ENCODE measurements at regions of chr13 and their contacts with region 1.

Region 1: DNA sequence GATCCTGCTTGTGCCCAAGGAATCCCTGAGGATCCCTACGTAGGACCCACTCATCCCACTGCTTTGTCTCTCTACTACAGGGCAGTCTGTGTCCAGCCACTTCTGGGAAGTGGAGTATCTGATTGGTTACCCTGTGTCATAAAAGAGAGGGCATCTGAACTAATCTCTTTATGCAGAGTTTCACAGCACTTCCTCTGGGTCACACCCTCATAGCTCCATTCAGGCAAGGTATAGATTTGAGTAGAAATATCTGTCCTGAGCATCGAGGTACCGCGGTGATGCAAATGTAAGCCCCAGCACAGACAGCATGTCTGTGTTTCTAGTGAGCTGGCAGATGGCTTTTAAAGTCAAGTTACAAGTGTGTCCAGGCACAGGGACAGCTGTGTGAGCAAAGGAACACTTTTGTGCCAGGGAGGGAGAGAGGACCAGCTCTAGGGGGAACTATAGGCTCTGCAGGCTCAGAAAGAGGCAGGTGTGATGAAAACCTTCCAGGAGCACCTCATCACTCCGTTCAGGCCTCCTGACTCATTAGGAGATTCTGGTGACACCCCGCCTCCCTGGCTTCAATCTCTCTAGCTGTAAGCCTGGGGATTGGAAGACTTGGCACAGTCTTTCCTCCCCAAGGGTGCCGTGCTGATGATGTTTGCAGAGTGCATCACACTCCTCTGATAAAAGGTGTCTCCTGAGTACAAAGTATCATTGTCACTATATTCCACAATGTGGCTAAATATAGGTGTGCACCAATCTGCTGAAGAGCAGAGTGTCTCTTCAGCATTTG is 84.3 kb upstream of the UBL3 start:
- DNase-seq: no peak
- H3K4me3 ChIP-seq: no peak overlapping the region
- H3K27ac ChIP-seq: no peak overlapping the region
- H3K4me1 ChIP-seq: no peaks in the 10 kb centered on the region
- H3K27me3 ChIP-seq: no peaks in the 10 kb centered on the region
- CTCF ChIP-seq: no peak
- POLR2A ChIP-seq: no peak

Region 2: DNA sequence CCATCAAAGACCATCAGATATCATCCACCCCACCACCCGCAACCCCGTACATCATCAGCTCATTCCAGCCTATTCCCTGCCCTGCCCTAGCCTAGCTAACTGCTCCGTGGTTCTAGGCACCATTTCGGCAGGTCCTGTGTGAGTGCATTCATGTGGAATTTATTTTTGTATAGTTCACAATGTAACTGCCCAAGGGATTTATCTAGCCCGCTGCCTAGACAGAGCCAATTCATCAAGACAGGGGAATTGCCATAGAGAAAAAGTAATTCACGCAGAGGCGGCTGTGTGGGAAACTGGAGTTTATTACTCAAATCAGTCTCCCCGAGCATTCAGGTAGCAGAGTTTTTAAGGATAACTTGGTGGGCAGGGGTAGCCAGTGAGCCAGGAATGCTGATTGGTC is 24.9 kb after region 1 on chr13:
- intact Hi-C with region 1: loop called (anchors 1 kb)
- DNase-seq: no peak
- H3K4me3 ChIP-seq: no peak overlapping the region
- H3K27ac ChIP-seq: no peak overlapping the region
- H3K4me1 ChIP-seq: no peaks in the 10 kb centered on the region
- H3K27me3 ChIP-seq: no peaks in the 10 kb centered on the region
- CTCF ChIP-seq: no peak
- POLR2A ChIP-seq: no peak

Region 3: GRCh38 chr13:30091691-30092090 is 157.0 kb after region 1 on chr13:
- intact Hi-C with region 1: no loop called
- DNase-seq: no peak
- H3K4me3 ChIP-seq: no peak overlapping the region
- H3K27ac ChIP-seq: no peak overlapping the region
- H3K4me1 ChIP-seq: no peaks in the 10 kb centered on the region
- H3K27me3 ChIP-seq: no peaks in the 10 kb centered on the region
- CTCF ChIP-seq: no peak
- POLR2A ChIP-seq: no peak